MCF 10A (cell line): ENCODE measurements at regions of chr7 and their contacts with region 1.

Region 1: GRCh38 chr7:44847508-44847920 is 373 bp downstream of the H2AZ2 start:
- DNase-seq: peak; percentile 81
- H3K4me3 Mint-ChIP-seq: peak overlapping the region; percentile 87
- H3K27ac Mint-ChIP-seq: peak overlapping the region; percentile 90
- H3K4me1 Mint-ChIP-seq: peaks cover 12% of the 10 kb centered on the region
- H3K27me3 Mint-ChIP-seq: no peaks in the 10 kb centered on the region
- CTCF ChIP-seq: peak; percentile 92

Region 2: DNA sequence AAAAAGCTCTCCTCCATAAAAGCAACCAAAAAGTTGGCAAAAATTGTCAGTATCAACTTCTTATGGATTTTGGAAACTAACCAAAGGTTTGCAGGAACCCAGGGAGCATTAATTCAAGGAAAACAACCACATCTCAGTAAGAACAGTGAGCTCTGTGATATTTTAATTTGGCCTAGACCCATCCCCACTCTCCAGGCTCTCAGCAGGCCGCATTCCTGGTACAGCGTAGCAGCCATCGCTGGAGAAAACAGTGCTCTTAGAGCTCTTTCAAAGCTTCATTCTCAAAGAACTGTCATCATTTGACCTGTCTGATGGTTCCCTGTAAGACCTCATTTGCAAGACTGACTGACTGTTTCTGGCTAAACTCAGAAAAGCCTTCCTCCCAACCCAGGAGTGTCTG is 438.9 kb before region 1 on chr7:
- CTCF ChIA-PET with region 1: no interaction called
- POLR2A ChIA-PET with region 1: no interaction called
- intact Hi-C with region 1: no loop called
- DNase-seq: no peak
- H3K4me3 Mint-ChIP-seq: no peak overlapping the region
- H3K27ac Mint-ChIP-seq: no peak overlapping the region
- H3K4me1 Mint-ChIP-seq: no peaks in the 10 kb centered on the region
- H3K27me3 Mint-ChIP-seq: no peaks in the 10 kb centered on the region
- CTCF ChIP-seq: no peak

Region 3: DNA sequence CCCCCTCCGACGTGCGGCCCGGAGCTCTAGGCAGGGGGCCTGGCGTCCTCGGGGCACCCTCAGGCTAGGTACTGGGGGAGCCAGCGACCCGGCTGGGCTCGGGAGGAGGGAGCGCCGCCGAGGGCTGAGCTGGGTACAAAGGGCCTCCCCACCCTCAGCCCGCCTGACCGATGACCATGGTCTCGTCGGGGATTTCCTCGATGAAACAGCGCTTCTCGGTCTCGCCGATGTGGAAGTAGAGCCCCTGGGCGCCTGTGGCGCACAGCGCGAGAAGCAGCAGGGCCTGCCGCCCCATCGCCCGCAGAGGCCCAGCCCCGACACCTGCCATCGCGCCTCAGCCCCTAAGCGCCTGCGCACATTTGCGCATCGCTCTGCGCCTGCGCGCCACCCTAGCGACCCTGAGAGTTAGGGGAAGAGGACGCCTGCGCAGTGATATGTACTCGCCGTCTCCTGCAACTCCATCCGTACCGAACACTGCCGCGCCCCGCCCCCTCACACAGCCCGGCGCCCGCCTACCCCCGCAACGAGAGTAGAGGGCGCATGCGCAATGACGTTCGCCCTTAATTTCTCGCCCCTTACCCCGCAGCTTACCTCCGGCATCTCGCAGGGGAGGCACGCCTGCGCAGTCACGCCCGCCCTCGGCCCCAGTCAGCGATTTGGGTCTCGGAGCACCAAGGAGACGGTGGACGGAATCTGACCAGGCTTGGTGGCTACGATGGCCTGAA is 265.5 kb before region 1 on chr7 and contains the start of gene TMED4:
- CTCF ChIA-PET with region 1: no interaction called
- POLR2A ChIA-PET with region 1: interaction called, 23 read pairs
- intact Hi-C with region 1: no loop called
- DNase-seq: peak; percentile 99
- H3K4me3 Mint-ChIP-seq: peak within 1 kb of the TSS; percentile 85
- H3K27ac Mint-ChIP-seq: peak within 1 kb of the TSS; percentile 93
- H3K4me1 Mint-ChIP-seq: peaks cover 6% of the 10 kb centered on the region
- H3K27me3 Mint-ChIP-seq: no peaks in the 10 kb centered on the region
- CTCF ChIP-seq: no peak
- total RNA-seq, gene TMED4: 49.7 and 58.0 TPM in 2 replicates

Region 4: GRCh38 chr7:44638611-44639557 is 208.6 kb before region 1 on chr7:
- CTCF ChIA-PET with region 1: no interaction called
- POLR2A ChIA-PET with region 1: interaction called, 22 read pairs
- intact Hi-C with region 1: no loop called
- DNase-seq: peak; percentile 90
- H3K4me3 Mint-ChIP-seq: peak overlapping the region; percentile 59
- H3K27ac Mint-ChIP-seq: peak overlapping the region; percentile 98
- H3K4me1 Mint-ChIP-seq: peaks cover 48% of the 10 kb centered on the region
- H3K27me3 Mint-ChIP-seq: no peaks in the 10 kb centered on the region
- CTCF ChIP-seq: no peak

Region 5: DNA sequence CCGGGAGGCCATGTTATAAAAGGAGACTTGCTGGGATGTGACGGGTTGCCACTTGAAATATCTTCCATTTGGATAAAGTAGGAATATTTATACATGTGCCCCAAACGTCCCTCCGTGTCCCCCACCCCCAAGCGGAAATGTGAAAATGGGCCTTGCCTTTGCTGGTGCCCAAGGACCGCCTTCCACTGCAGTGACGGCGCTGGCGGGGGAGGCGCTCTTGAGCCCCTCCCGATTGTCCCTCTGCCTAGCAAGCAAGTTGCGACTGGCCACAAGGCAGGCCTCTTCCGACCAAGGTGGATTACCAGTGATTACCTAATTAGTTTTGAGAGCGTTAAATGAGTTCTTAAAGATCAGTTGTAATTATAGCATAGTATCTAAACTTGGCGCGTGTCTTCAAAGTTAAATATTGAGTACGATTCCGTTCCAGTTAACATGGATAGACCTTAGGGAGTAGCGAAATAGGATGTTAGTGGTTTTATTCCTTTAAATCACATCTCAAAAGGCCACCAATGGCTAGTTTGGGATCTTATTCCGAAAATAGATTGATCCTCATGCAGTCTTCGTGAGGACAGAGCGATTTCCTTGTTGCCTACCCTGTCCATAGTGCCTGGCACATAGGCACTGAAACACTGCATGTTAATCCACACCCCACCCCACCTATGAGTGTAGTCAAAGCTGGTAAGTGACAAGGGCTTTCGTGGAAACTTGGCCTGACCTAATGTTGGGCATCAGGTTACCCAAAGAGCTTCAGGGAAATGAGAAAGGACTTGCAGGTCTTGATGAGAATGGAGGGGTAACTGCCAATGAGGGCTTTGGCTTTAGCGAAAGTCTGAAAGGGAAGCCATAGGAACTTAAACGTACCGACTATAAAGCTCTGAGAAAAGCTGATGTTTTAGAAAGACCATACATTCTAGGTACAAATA is 49.9 kb before region 1 on chr7:
- CTCF ChIA-PET with region 1: interaction called, 11 read pairs
- POLR2A ChIA-PET with region 1: interaction called, 75 read pairs
- intact Hi-C with region 1: loop called (anchors 1 kb)
- DNase-seq: peak; percentile 90
- H3K4me3 Mint-ChIP-seq: peak overlapping the region; percentile 87
- H3K27ac Mint-ChIP-seq: peak overlapping the region; percentile 98
- H3K4me1 Mint-ChIP-seq: peaks cover 6% of the 10 kb centered on the region
- H3K27me3 Mint-ChIP-seq: no peaks in the 10 kb centered on the region
- CTCF ChIP-seq: peak; percentile 42

Region 6: DNA sequence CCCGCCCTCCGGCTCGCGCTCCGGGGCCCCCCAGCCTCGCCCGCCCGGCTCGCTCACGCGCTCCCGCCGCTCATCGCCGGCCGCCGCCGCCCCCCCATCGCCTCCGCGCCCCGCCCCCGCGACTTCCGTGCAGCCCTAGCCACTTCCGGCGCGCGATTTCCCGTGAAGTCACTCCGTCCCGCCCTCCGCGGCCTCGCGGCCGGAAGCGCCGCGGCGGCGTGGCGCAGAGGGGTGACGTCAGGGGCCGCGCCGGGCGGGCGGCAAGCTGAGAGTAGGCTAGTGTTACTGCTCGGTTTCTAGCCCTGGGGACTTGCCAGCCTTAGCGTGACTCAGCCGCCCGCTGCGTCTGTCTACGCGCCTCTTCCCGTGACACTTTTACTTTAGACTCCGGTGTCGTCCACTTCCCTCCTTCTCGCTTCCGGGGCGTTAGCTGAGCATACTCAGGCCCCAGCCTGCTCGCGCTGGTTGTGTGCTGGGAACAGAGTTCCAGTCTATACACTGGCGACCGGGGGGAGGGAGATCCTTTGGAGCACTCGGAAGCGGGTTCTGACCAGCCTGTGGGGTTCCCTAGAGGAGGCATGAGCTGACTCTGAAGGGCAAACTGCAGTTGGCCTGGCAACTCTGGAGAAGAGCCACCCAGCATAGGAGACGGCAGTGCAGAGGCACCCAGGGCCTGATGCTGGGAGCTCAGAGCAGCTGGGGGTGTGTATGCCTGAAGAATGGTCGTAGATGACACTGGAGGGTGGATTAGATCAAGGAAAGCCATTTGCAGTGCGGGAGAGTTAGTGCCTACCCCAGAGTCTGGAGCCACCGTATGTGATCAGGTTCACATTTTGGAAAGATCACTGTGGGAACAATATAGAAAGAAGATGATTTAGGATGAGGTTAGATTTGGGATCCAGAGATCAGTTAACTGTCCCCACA is 38.1 kb after region 1 on chr7 and contains the start of gene PURB:
- CTCF ChIA-PET with region 1: interaction called, 5 read pairs
- POLR2A ChIA-PET with region 1: interaction called, 140 read pairs
- intact Hi-C with region 1: no loop called
- DNase-seq: peak; percentile 96
- H3K4me3 Mint-ChIP-seq: peak within 1 kb of the TSS; percentile 93
- H3K27ac Mint-ChIP-seq: peak within 1 kb of the TSS; percentile 99
- H3K4me1 Mint-ChIP-seq: peaks cover 25% of the 10 kb centered on the region
- H3K27me3 Mint-ChIP-seq: no peaks in the 10 kb centered on the region
- CTCF ChIP-seq: no peak
- total RNA-seq, gene PURB: 21.3 and 27.9 TPM in 2 replicates

Region 7: DNA sequence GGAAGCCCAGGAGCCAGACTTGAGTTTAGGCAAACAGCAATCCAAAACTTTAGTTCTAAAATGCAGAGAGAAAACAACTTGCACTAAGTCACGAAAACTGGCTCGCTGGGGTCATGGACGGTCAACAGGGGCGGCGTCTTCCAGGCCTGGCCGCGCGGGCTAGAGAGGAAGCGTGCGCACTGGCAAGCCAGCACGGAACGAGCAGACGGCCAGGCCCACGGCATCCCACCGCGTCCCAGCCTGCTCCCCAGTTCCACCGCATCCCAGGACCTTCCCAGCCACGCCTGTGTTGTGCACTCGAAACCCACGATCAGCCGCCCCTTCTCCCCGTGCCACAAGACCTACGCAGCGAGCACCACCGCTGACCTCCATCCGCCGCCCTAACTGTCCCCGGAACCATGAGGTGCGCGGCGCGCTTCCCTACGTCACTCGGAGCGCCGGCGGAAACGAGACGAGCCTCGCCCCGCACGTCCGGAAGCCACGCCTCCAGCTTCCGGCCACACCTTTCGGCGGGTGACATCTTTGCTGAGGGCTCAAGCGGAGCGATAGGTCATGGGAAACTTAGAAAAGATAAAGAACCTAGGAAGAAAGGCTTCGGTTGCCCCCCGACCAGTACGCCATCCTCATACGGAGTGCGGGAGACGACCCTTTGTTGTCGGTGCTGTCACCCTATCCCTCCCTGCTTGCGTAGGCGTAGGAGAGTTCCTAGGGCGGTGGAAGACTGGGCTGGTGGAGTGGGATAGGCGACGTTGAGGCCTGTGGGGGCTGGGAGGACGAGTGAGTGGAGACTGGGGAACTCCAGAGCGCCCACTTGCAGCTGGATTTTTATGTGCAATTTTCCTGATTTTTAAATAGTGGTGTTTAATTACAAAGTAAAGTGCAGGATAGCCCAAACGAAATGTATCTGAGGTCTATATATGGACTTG is 264.0 kb after region 1 on chr7 and contains the start of gene TBRG4:
- CTCF ChIA-PET with region 1: no interaction called
- POLR2A ChIA-PET with region 1: interaction called, 12 read pairs
- intact Hi-C with region 1: no loop called
- DNase-seq: peak; percentile 94
- H3K4me3 Mint-ChIP-seq: peak within 1 kb of the TSS; percentile 91
- H3K27ac Mint-ChIP-seq: peak within 1 kb of the TSS; percentile 97
- H3K4me1 Mint-ChIP-seq: peaks cover 19% of the 10 kb centered on the region
- H3K27me3 Mint-ChIP-seq: no peaks in the 10 kb centered on the region
- CTCF ChIP-seq: no peak
- total RNA-seq, gene TBRG4: 77.2 and 85.7 TPM in 2 replicates